Psoas muscle (tissue), 8 donors: ENCODE measurements at regions of chrX and their contacts with region 1.

Region 1: DNA sequence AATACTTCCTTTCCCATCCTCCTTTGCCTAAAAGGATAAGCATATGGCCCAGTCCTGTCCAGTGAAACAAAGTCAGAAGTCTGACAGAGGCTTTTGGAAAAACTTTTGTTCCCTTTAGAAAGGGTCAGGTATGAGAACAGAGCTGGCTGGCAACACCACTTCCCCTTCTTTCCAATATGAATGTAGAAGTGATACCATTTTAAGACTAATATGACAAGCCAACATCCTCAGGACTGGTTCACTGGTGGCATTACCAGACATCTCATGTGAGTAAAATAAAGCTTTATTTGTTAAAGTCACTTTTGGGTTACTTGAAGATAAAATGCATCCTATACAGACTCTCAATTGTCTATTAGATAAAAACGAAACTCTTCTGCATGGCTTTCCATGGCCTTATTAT is 83.6 kb upstream of the PTCHD1 start:
- DNase-seq: no peak
- ATAC-seq: no peak
- H3K4me3 ChIP-seq: no peak overlapping the region
- H3K27ac ChIP-seq: no peak overlapping the region
- H3K4me1 ChIP-seq: no peaks in the 10 kb centered on the region
- H3K27me3 ChIP-seq: no peaks in the 10 kb centered on the region
- CTCF ChIP-seq: no peak

Region 2: GRCh38 chrX:21479695-21480270 is 1771.3 kb before region 1 on chrX:
- intact Hi-C with region 1: loop called in 1 of 2 experiments (anchors 10 kb)
- DNase-seq: no peak
- ATAC-seq: peak in 2 of 4 donors; percentile 57 to 60
- H3K4me3 ChIP-seq: no peak overlapping the region
- H3K27ac ChIP-seq: no peak overlapping the region
- H3K4me1 ChIP-seq: no peaks in the 10 kb centered on the region
- H3K27me3 ChIP-seq: peaks cover 0 to 4% (median 0%) of the 10 kb centered on the region in 3 donors
- CTCF ChIP-seq: peak; percentile 55